Naive thymus-derived CD8-positive, alpha-beta T cell (primary cell): ENCODE measurements at regions of chr20 and their contacts with region 1.

Region 1: GRCh38 chr20:43456809-43457639 is 672 bp upstream of the SRSF6 start:
- DNase-seq: peak in 9 of 10 donors; percentile 70 to 94 (median 86)
- ATAC-seq: peak; percentile 80 to 81
- H3K4me3 Mint-ChIP-seq: peak overlapping the region; percentile 88 to 97 (median 94)
- H3K27ac Mint-ChIP-seq: peak overlapping the region; percentile 97 to 99 (median 98)
- H3K4me1 Mint-ChIP-seq: peaks cover 11 to 39% (median 28%) of the 10 kb centered on the region in 4 donors
- H3K27me3 Mint-ChIP-seq: peaks cover 0 to 9% (median 3%) of the 10 kb centered on the region in 5 donors

Region 2: GRCh38 chr20:43514062-43514999 is 57.3 kb after region 1 on chr20:
- POLR2A ChIA-PET with region 1: interaction called, 23 read pairs
- DNase-seq: peak; percentile 80 to 98 (median 93)
- ATAC-seq: peak; percentile 86 to 90
- H3K4me3 Mint-ChIP-seq: peak overlapping the region; percentile 88 to 96 (median 92)
- H3K27ac Mint-ChIP-seq: peak overlapping the region; percentile 84 to 97 (median 92)
- H3K4me1 Mint-ChIP-seq: peaks cover 20 to 25% (median 22%) of the 10 kb centered on the region in 4 donors
- H3K27me3 Mint-ChIP-seq: peaks cover 0 to 10% (median 5%) of the 10 kb centered on the region in 5 donors

Region 3: DNA sequence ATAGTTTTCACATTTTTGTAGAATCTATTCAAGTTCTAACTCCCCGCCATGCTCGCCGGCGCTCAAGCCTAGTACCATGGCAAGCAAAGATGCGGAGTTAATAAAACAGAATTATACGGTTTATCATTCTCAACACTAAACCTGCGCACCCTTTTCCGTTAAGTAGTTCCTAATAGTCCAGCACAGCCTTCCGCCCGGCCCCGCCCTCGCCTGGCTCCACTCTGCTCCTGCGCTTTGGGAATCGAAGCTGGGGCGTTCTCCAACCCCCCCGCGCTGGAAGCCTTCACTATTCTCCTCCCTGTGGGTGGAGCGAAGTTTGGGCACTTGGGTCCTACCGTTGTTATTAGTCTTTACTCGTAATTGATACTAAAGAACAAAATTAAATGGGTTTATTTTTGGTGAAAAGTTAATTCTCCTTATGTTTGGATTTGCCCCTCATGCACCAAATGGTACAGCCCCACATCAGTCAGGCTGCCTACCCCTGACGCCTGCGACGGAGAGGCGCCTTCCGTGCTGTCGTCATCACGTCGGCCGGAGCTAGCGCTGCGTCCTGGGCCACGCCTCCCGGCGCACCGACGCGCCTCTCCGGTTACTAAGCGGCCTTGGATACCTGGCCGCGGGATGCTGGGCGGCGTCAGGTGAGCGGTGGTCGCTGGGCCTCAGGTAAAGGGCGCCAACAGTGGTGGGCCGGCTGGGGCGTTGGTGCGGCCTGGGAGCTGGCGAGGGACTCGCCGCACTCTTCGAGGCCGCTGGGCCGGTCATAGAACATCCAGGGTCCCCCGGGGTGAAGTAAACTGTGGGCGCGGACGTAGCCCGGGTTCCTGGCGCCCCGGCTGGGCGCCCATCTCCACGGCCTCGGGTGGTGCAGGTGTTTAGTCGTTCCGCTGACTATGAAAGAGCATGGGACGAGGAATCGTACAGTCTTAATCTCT is 133.6 kb after region 1 on chr20 and contains the start of gene IFT52:
- POLR2A ChIA-PET with region 1: interaction called, 25 read pairs
- DNase-seq: peak; percentile 81 to 93 (median 86)
- ATAC-seq: peak; percentile 95 to 97
- H3K4me3 Mint-ChIP-seq: peak within 1 kb of the TSS; percentile 90 to 96 (median 94)
- H3K27ac Mint-ChIP-seq: peak within 1 kb of the TSS; percentile 95 to 99 (median 97)
- H3K4me1 Mint-ChIP-seq: peaks cover 11 to 22% (median 19%) of the 10 kb centered on the region in 4 donors
- H3K27me3 Mint-ChIP-seq: peaks cover 0 to 8% (median 3%) of the 10 kb centered on the region in 5 donors
- polyA plus RNA-seq, gene IFT52: 28.5 to 35.4 (median 30.3) TPM